Natural killer cell (primary cell): ENCODE measurements at regions of chr6 and their contacts with region 1.

Region 1: DNA sequence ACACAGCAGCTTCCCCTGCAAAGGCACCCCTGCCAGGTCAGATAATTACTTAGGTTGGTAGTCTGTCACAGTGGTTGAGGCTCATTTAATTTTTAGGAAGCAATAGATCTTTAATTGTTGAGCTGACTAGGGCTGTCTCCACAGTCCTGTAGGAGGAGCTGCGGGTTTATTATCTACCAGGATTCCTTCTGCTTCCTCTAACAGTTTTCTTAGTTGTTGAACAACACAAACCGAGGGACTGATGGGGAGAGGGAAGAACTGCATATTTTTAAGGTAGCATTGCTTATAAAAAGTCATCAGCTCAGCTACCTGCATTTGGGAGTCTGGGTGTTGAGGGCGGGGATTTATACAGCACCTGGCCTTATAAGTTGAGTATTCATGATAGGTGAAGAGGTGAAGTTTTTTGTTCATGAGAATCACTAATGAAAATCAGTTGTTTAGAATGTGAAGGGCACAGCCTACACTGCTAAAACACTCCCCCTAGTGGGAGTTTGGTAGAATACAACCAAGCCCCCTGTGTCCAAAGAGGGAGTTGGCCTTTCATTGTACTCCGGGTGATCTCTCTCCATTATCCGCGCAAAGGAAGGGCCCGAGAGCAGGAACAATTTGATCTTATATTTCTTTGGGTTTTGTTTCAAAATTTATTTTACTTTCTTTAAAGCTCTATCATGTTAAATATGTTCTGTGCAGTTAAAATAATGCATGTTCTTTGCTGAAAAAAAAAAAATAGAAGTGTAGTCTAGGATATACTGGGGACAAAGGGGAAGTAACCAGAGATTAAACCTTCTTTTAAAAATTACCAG is 69.6 kb downstream of the SSR1 start:
- DNase-seq: peak in 1 of 2 donors; percentile 76
- ATAC-seq: peak; percentile 82 to 92 (median 87)
- H3K4me3 ChIP-seq: no peak overlapping the region
- H3K4me3 Mint-ChIP-seq: no peak overlapping the region
- H3K27ac ChIP-seq: no peak overlapping the region
- H3K27ac Mint-ChIP-seq: peak overlapping the region; percentile 31 to 60
- H3K4me1 ChIP-seq: no peaks in the 10 kb centered on the region
- H3K4me1 Mint-ChIP-seq: peaks cover 8 to 16% of the 10 kb centered on the region in 2 donors
- H3K27me3 ChIP-seq: no peaks in the 10 kb centered on the region
- H3K27me3 Mint-ChIP-seq: no peaks in the 10 kb centered on the region
- CTCF ChIP-seq: peak; percentile 82

Region 2: DNA sequence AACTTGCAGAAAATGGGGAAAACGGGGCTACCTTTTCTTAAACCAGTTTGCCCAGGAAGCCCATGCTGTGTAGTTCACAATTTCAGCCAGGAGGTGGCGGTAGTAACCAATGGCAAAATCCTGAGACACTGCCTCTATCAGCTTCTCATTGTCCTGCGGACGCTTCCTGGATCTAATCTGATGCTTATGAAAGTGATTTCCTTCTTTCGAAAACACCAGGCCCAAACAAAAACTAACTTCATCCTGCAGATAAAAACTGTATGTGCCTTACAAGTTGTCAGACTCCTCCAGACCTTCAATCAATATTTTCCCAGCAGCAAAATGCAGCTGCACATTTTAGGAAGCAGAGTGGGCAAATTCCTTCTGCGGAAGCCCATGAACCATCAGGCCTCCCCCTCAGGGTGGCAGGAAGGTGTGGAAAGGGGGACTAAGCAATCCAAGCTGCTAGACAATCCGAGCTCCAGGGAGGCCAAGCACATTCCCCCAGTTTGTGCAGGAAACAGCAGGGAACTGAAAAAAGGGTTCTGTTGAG is 566.4 kb before region 1 on chr6:
- intact Hi-C with region 1: loop called (anchors 1 kb)
- DNase-seq: peak; percentile 71 to 89
- ATAC-seq: peak; percentile 90 to 96 (median 91)
- H3K4me3 ChIP-seq: no peak overlapping the region
- H3K4me3 Mint-ChIP-seq: no peak overlapping the region
- H3K27ac ChIP-seq: no peak overlapping the region
- H3K27ac Mint-ChIP-seq: no peak overlapping the region
- H3K4me1 ChIP-seq: peaks cover 4% of the 10 kb centered on the region
- H3K4me1 Mint-ChIP-seq: peaks cover 6 to 7% of the 10 kb centered on the region in 2 donors
- H3K27me3 ChIP-seq: no peaks in the 10 kb centered on the region
- H3K27me3 Mint-ChIP-seq: no peaks in the 10 kb centered on the region
- CTCF ChIP-seq: peak; percentile 90

Region 3: GRCh38 chr6:6758915-6759654 is 484.3 kb before region 1 on chr6:
- intact Hi-C with region 1: loop called (anchors 2 kb)
- DNase-seq: peak in 1 of 2 donors; percentile 48
- ATAC-seq: peak; percentile 47 to 66 (median 64)
- H3K4me3 ChIP-seq: no peak overlapping the region
- H3K4me3 Mint-ChIP-seq: no peak overlapping the region
- H3K27ac ChIP-seq: no peak overlapping the region
- H3K27ac Mint-ChIP-seq: no peak overlapping the region
- H3K4me1 ChIP-seq: no peaks in the 10 kb centered on the region
- H3K4me1 Mint-ChIP-seq: no peaks in the 10 kb centered on the region
- H3K27me3 ChIP-seq: no peaks in the 10 kb centered on the region
- H3K27me3 Mint-ChIP-seq: peaks cover 5 to 6% of the 10 kb centered on the region in 2 donors
- CTCF ChIP-seq: peak; percentile 45

Region 4: GRCh38 chr6:7086488-7086887 is 156.9 kb before region 1 on chr6:
- intact Hi-C with region 1: loop called (anchors 2 kb)
- DNase-seq: peak in 1 of 2 donors; percentile 72
- ATAC-seq: peak; percentile 53 to 69 (median 55)
- H3K4me3 ChIP-seq: peak overlapping the region; percentile 38
- H3K4me3 Mint-ChIP-seq: peak overlapping the region; percentile 94
- H3K27ac ChIP-seq: peak overlapping the region; percentile 34
- H3K27ac Mint-ChIP-seq: peak overlapping the region; percentile 79 to 87
- H3K4me1 ChIP-seq: peaks cover 21% of the 10 kb centered on the region
- H3K4me1 Mint-ChIP-seq: peaks cover 23 to 26% of the 10 kb centered on the region in 2 donors
- H3K27me3 ChIP-seq: no peaks in the 10 kb centered on the region
- H3K27me3 Mint-ChIP-seq: no peaks in the 10 kb centered on the region
- CTCF ChIP-seq: no peak

Region 5: GRCh38 chr6:7137335-7138045 is 105.9 kb before region 1 on chr6:
- intact Hi-C with region 1: no loop called
- DNase-seq: peak in 1 of 2 donors; percentile 80
- ATAC-seq: peak; percentile 21 to 40 (median 31)
- H3K4me3 ChIP-seq: peak overlapping the region; percentile 4
- H3K4me3 Mint-ChIP-seq: peak overlapping the region; percentile 63
- H3K27ac ChIP-seq: peak overlapping the region; percentile 36
- H3K27ac Mint-ChIP-seq: peak overlapping the region; percentile 70 to 82
- H3K4me1 ChIP-seq: peaks cover 24% of the 10 kb centered on the region
- H3K4me1 Mint-ChIP-seq: peaks cover 32 to 46% of the 10 kb centered on the region in 2 donors
- H3K27me3 ChIP-seq: no peaks in the 10 kb centered on the region
- H3K27me3 Mint-ChIP-seq: no peaks in the 10 kb centered on the region
- CTCF ChIP-seq: no peak

Region 6: DNA sequence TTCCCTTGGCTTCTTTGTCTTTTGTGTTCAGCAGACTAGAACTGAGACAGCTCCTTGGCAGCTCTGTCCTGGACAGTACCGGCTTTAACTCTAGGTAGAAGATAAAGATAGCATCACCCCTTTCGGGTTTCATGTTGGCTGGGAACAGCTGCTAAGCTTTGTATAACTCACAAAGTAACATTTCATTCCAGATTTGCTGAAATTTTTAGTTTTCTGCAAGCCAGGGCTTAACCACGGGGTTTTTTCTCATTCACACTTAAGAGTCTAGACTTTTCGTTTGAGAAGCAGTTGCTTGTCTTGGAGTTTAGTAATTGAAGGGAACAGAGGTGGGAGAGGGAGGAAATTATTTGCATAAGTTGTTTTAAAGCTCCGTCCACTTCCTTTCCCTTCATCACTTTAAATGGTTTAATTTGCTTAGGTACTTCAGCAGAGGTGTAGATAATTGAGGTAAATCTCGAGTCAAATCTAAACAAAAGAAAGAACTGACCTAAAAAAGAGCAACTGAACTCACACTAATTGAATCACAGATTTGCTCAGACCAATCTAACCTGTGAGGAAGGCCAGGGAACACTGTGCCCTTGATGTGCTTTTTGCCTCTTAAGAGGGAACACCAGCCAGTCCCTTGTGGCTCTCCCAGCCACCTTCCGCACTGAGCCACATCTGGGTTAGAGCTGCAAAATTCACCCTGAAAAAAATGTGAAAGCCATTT is 87.4 kb before region 1 on chr6:
- intact Hi-C with region 1: no loop called
- DNase-seq: no peak
- ATAC-seq: no peak
- H3K4me3 ChIP-seq: no peak overlapping the region
- H3K4me3 Mint-ChIP-seq: peak overlapping the region; percentile 49
- H3K27ac ChIP-seq: peak overlapping the region; percentile 27
- H3K27ac Mint-ChIP-seq: peak overlapping the region; percentile 86 to 90
- H3K4me1 ChIP-seq: peaks cover 35% of the 10 kb centered on the region
- H3K4me1 Mint-ChIP-seq: peaks cover 77 to 79% of the 10 kb centered on the region in 2 donors
- H3K27me3 ChIP-seq: no peaks in the 10 kb centered on the region
- H3K27me3 Mint-ChIP-seq: no peaks in the 10 kb centered on the region
- CTCF ChIP-seq: no peak